CD4-positive, alpha-beta memory T cell (primary cell): ENCODE measurements at regions of chr9 and their contacts with region 1.

Region 1: DNA sequence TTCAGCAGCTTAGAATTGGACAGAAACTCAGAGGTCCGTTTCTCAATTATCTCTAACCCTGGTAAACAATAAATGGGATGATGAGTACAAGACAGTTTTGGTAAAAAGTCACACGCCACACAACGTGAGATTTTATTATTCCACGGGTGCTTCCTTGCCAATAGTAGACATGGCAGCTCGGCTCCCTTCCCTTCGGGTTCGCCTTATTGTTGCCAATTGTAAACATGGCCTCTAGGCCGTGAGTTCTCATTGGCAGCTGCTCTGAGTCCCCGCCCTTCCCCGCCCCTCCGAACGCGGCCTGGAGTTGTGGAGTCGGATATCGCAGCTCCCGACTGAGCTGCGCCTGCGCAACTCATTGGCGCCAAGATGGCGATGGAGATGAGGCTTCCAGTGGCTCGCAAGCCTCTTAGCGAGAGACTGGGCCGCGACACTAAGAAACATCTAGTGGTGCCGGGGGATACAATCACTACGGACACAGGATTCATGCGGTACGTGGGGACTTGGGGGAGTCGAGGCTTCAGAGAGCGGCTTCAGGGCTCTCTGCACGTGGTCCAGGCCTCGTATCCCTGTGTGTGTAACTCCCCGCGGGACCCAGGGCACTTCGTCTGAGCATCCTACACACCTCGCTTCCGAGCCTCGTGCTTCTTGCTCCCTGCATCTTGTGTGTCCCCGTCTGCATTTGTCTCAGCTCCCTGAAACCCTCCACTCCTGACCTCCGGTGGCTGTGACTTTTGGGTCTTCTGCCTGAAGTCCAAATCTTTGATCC is at the start of gene EXOSC2:
- DNase-seq: peak; percentile 88 to 99 (median 92)
- H3K4me3 ChIP-seq: peak within 1 kb of the TSS; percentile 91 to 93
- H3K4me3 Mint-ChIP-seq: peak within 1 kb of the TSS; percentile 92 to 99 (median 95)
- H3K27ac ChIP-seq: peak within 1 kb of the TSS; percentile 80
- H3K27ac Mint-ChIP-seq: peak within 1 kb of the TSS; percentile 83 to 98 (median 96)
- H3K4me1 ChIP-seq: peaks cover 40% of the 10 kb centered on the region
- H3K4me1 Mint-ChIP-seq: peaks cover 32 to 63% (median 44%) of the 10 kb centered on the region in 4 donors
- H3K27me3 ChIP-seq: no peaks in the 10 kb centered on the region
- H3K27me3 Mint-ChIP-seq: no peaks in the 10 kb centered on the region
- total RNA-seq, gene EXOSC2: 53.9 to 60.8 TPM

Region 2: GRCh38 chr9:130579738-130580463 is 113.7 kb before region 1 on chr9:
- CTCF ChIA-PET with region 1: no interaction called
- POLR2A ChIA-PET with region 1: interaction called, 6 read pairs
- intact Hi-C with region 1: loop called (anchors 5 kb)
- DNase-seq: peak in 1 of 5 donors; percentile 4
- H3K4me3 ChIP-seq: peak overlapping the region; percentile 8 to 53
- H3K4me3 Mint-ChIP-seq: peak overlapping the region; percentile 87 to 92 (median 90)
- H3K27ac ChIP-seq: peak overlapping the region; percentile 80
- H3K27ac Mint-ChIP-seq: peak overlapping the region; percentile 77 to 95 (median 91)
- H3K4me1 ChIP-seq: peaks cover 39% of the 10 kb centered on the region
- H3K4me1 Mint-ChIP-seq: peaks cover 33 to 57% (median 45%) of the 10 kb centered on the region in 4 donors
- H3K27me3 ChIP-seq: no peaks in the 10 kb centered on the region
- H3K27me3 Mint-ChIP-seq: no peaks in the 10 kb centered on the region

Region 3: DNA sequence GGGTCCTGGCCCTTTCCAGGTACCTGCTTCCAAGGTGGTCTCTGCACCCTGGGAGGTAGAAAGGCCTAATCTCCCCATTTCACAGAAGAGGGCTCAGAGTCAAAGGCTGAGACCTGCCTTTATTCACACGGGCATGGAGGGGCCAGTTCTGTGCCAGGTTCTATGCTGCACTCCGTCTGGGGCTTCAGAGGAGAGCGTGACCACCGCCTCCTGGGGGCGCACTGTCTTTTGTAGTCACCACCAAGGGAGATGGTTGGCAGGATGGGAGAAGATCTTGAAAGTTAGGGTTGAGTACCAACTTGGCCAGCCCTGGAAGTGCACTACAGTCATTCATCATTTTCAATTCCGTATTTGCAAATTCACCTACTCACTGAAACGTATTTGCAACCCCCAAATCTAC is 52.9 kb before region 1 on chr9:
- CTCF ChIA-PET with region 1: no interaction called
- POLR2A ChIA-PET with region 1: no interaction called
- intact Hi-C with region 1: no loop called
- DNase-seq: no peak
- H3K4me3 ChIP-seq: no peak overlapping the region
- H3K4me3 Mint-ChIP-seq: no peak overlapping the region
- H3K27ac ChIP-seq: no peak overlapping the region
- H3K27ac Mint-ChIP-seq: no peak overlapping the region
- H3K4me1 ChIP-seq: no peaks in the 10 kb centered on the region
- H3K4me1 Mint-ChIP-seq: no peaks in the 10 kb centered on the region
- H3K27me3 ChIP-seq: no peaks in the 10 kb centered on the region
- H3K27me3 Mint-ChIP-seq: no peaks in the 10 kb centered on the region

Region 4: GRCh38 chr9:130707225-130707976 is 13.8 kb after region 1 on chr9:
- CTCF ChIA-PET with region 1: interaction called, 39 read pairs
- POLR2A ChIA-PET with region 1: interaction called, 10 read pairs
- intact Hi-C with region 1: loop called (anchors 1 kb)
- DNase-seq: peak; percentile 66 to 72 (median 67)
- H3K4me3 ChIP-seq: no peak overlapping the region
- H3K4me3 Mint-ChIP-seq: no peak overlapping the region
- H3K27ac ChIP-seq: no peak overlapping the region
- H3K27ac Mint-ChIP-seq: peak overlapping the region in 5 of 7 donors; percentile 6 to 79 (median 60)
- H3K4me1 ChIP-seq: peaks cover 5% of the 10 kb centered on the region
- H3K4me1 Mint-ChIP-seq: peaks cover under 1 to 7% (median 4%) of the 10 kb centered on the region in 4 donors
- H3K27me3 ChIP-seq: no peaks in the 10 kb centered on the region
- H3K27me3 Mint-ChIP-seq: no peaks in the 10 kb centered on the region

Region 5: DNA sequence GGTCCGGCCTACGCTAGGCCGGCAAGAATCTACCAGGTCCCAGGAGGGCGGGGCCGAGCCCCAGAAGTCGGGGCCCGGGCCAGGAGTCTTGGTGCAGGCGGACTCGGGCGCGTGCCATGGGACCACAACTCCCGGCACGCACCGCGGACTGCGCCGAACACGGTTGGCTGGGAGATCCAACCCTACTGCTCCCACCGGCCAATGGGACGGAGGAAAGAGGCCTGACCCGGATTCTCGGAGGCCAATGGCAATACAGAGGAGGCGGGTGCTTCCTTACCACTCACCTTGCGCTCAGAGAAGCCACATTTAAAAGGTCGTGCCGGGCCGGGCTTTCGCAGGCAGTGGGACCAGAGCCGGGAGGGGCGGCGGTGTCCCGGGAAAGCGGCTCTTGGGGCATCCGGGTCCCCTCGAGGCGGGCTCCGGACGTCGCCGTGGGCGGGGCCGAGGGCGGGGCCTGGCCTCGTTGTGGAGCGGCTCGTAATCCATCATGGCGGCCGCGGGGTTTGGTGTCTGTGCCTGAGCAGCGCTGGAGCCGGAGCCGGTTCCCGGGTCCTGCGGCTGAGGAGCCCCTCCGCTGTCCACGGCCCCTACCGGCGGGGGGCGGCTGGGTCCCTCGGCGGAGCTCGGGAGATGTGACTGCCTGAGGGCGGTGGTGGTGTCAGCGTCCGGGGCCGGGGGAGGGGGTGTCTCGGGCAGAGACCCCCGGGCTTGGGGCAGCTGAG is 19.1 kb after region 1 on chr9:
- CTCF ChIA-PET with region 1: interaction called, 39 read pairs
- POLR2A ChIA-PET with region 1: interaction called, 21 read pairs
- intact Hi-C with region 1: loop called (anchors 1 kb)
- DNase-seq: peak; percentile 95 to 97 (median 97)
- H3K4me3 ChIP-seq: peak overlapping the region; percentile 65 to 88
- H3K4me3 Mint-ChIP-seq: peak overlapping the region; percentile 91 to 96 (median 92)
- H3K27ac ChIP-seq: peak overlapping the region; percentile 97
- H3K27ac Mint-ChIP-seq: peak overlapping the region; percentile 90 to 99 (median 97)
- H3K4me1 ChIP-seq: peaks cover 40% of the 10 kb centered on the region
- H3K4me1 Mint-ChIP-seq: peaks cover 25 to 42% (median 34%) of the 10 kb centered on the region in 4 donors
- H3K27me3 ChIP-seq: no peaks in the 10 kb centered on the region
- H3K27me3 Mint-ChIP-seq: no peaks in the 10 kb centered on the region

Region 6: GRCh38 chr9:130768265-130768664 is 74.7 kb after region 1 on chr9:
- CTCF ChIA-PET with region 1: no interaction called
- POLR2A ChIA-PET with region 1: no interaction called
- intact Hi-C with region 1: no loop called
- DNase-seq: no peak
- H3K4me3 ChIP-seq: no peak overlapping the region
- H3K4me3 Mint-ChIP-seq: no peak overlapping the region
- H3K27ac ChIP-seq: no peak overlapping the region
- H3K27ac Mint-ChIP-seq: peak overlapping the region in 2 of 7 donors; percentile 34 to 64
- H3K4me1 ChIP-seq: no peaks in the 10 kb centered on the region
- H3K4me1 Mint-ChIP-seq: peaks cover 31 to 53% (median 39%) of the 10 kb centered on the region in 4 donors
- H3K27me3 ChIP-seq: no peaks in the 10 kb centered on the region
- H3K27me3 Mint-ChIP-seq: no peaks in the 10 kb centered on the region

Region 7: DNA sequence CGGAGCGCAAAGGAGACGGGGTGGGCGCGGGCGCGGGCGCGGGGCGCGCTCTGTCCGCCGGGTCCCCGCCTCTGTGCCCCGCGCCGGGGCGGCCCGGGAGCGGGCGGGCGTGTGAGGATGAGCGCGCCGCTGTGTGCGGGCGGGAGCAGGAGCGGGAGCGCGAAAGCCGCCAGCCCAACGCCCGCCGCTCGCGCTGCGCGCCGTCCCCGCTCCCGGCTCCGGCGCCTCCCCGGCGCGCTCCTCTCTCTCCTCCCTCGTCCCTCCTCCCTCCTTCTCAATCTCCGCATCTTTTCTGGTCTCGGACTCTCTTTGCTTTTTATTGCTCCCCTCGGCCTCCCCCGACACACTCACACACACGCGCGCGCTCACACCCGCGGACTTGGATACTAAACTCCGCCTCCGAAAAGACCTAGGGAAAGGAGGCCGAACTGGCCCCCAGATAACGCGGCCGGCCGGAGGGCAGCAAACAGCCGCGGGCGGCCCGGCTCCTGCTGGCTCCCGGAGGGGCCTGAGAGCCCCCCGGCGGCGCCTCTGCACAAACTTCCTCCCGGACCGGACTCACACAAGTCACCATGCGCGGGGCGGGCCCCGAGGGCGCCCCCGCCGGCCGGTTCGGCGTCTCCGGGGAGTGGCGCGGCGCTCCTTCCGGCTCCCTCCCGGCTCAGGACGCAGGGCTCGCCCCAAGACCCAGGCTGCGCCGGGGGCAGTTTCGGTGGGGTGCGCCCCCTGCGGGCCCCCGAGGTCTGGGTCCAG is 245.2 kb after region 1 on chr9 and contains the start of gene FIBCD1:
- CTCF ChIA-PET with region 1: no interaction called
- POLR2A ChIA-PET with region 1: no interaction called
- intact Hi-C with region 1: no loop called
- DNase-seq: no peak
- H3K4me3 ChIP-seq: no peak within 1 kb of the TSS
- H3K4me3 Mint-ChIP-seq: peak within 1 kb of the TSS in 4 of 8 donors; percentile 32 to 77 (median 42)
- H3K27ac ChIP-seq: no peak within 1 kb of the TSS
- H3K27ac Mint-ChIP-seq: no peak within 1 kb of the TSS
- H3K4me1 ChIP-seq: peaks cover 12% of the 10 kb centered on the region
- H3K4me1 Mint-ChIP-seq: peaks cover 3 to 18% (median 10%) of the 10 kb centered on the region in 4 donors
- H3K27me3 ChIP-seq: peaks cover 46% of the 10 kb centered on the region
- H3K27me3 Mint-ChIP-seq: peaks cover 36 to 50% of the 10 kb centered on the region in 2 donors
- total RNA-seq, gene FIBCD1: not detected